PC-9 (cell line): ENCODE measurements at regions of chr2 and their contacts with region 1.

Region 1: GRCh38 chr2:239257511-239257937 is 143.3 kb downstream of the HDAC4 start:
- DNase-seq: peak in 1 of 2 experiments; percentile 49
- H3K4me3 ChIP-seq: no peak overlapping the region
- H3K27ac ChIP-seq: peak overlapping the region; percentile 48
- H3K4me1 ChIP-seq: peaks cover 14% of the 10 kb centered on the region
- H3K27me3 ChIP-seq: no peaks in the 10 kb centered on the region
- CTCF ChIP-seq: no peak

Region 2: DNA sequence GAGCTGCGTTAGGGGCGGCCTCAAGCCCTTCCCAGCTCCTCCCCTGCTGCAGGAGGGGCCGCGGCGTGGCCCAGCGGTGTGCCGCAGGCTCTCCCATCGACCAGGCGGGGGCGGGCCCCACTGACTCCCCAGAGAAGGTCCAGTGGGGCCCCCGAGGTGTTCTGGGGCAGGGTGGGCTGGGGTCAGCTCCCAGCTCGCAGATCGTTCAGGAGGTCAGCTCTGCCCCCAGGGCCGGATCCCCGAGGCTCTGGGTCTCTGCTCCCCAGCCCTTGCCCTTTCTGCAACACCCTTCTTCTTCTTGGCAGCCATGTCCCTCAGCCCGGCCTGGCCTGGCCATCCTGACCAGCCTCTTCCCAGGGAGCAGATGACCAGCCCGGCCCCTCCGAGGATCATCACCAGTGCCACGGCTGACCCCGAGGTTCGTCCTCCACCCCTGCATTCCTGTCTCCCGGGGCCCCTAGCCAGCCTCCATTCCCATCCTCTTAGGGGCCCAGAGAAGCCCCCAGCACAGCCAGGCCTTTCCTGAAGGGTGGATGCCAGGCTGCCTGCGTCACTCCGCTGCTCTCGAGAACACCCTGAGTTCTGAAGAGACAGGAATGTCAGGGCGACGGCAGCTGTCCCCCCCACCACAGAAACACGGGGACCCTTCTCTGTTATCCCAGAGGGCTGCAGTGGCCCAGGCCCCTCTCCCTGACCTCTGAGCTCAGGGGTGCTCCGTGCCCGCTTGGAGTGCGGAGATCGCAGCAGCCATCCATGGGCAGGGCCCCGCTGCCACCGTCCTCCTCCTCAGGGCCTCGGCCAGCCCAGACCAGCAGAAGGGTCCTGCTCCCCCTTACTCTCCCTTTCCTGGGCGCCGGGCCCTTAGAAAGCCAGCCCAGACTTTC is 1130.0 kb before region 1 on chr2:
- CTCF ChIA-PET with region 1: no interaction called
- POLR2A ChIA-PET with region 1: interaction called, 20 read pairs
- intact Hi-C with region 1: no loop called
- DNase-seq: peak in 1 of 2 experiments; percentile 65
- H3K4me3 ChIP-seq: no peak overlapping the region
- H3K27ac ChIP-seq: no peak overlapping the region
- H3K4me1 ChIP-seq: no peaks in the 10 kb centered on the region
- H3K27me3 ChIP-seq: peaks cover 15% of the 10 kb centered on the region
- CTCF ChIP-seq: no peak

Region 3: DNA sequence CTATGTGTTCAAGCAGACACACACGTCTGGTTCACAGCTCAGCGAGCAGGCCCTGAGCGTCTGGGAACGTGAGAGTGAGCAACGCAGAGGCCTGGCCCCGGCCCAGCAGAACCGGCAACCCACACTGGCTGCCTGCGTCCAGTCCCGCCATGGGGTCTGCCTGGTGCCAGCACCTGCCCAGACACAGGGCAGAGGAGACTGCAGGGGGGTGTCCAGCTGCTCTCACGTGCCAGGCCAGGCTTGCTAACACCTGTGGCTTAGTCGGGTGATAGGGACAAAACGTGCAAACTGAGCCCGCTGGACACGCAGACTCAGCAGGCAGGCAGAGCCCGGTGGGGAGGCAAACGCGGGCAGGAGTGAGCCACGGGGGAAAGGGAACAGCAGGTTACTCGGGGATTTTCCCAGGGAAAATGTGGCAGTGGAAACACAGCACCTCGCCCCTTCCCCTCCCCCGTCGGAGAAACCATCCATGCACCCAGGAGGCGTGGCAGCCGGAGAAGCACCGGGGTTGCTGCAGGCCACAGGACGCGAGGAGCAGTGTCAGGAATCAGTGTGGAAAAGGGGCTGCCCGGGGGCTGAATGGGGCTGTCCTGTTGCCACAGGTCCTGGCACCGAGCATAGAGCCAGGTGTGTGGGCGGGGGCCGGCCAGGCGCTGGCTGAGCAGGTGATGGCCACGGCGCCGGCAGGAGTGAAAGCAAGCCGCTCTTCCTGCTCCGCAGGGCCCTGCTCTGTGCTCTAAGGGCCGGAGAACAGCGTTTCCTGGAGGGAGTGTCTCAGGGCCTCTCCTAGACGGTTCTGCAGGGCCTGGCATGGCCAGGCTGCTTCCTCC is 11.4 kb before region 1 on chr2:
- CTCF ChIA-PET with region 1: no interaction called
- POLR2A ChIA-PET with region 1: no interaction called
- intact Hi-C with region 1: loop called (anchors 1 kb)
- DNase-seq: peak; percentile 71 to 74
- H3K4me3 ChIP-seq: peak overlapping the region; percentile 47; the same call in 1 of the 2 replicates
- H3K27ac ChIP-seq: peak overlapping the region; percentile 95
- H3K4me1 ChIP-seq: peaks cover 46% of the 10 kb centered on the region
- H3K27me3 ChIP-seq: no peaks in the 10 kb centered on the region
- CTCF ChIP-seq: no peak